ENCODE measurements at regions of chrX and their contacts with region 1.

Region 1: GRCh38 chrX:70042399-70043371 is 7.1 kb downstream of the AWAT2 start:
- DNase-seq: peak in 1 of 2 experiments; percentile 30
- ATAC-seq: peak in 1 of 2 experiments; percentile 69; a peak in 3 of 6 replicates
- H3K4me3 ChIP-seq: no peak overlapping the region
- H3K27ac ChIP-seq: no peak overlapping the region
- H3K4me1 ChIP-seq: peaks cover 7% of the 10 kb centered on the region; the same call in 1 of the 3 replicates
- CTCF ChIP-seq: no peak
- EP300 ChIP-seq: no peak
- POLR2A ChIP-seq: no peak
- RAD21 ChIP-seq: no peak

Region 2: DNA sequence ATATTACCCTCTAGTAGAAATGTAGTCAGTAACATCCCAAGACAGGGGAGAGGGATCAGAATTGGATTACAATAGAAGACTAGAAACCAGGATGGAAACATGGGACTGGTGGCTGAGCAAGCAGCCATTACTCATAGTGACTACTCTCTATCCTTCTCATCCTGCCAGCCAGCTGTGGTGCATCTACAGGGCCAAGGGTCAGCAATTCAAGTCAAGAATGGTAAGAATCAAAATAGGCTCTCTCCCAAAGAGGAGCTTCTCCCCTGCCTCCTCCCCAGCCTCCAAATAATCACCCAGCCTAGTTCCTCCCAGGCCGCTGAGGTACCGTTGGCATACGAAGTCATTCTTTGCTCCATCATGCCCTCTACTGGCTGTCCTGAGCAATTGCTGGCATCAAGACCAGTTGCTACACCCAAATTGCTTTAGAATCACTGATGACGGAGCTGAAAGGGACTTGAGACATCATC is 12.4 kb before region 1 on chrX:
- CTCF ChIA-PET with region 1: interaction called, 49 read pairs
- POLR2A ChIA-PET with region 1: no interaction called
- DNase-seq: peak; percentile 51 to 61
- ATAC-seq: peak; percentile 77 to 89
- H3K4me3 ChIP-seq: no peak overlapping the region
- H3K27ac ChIP-seq: no peak overlapping the region
- H3K4me1 ChIP-seq: no peaks in the 10 kb centered on the region
- CTCF ChIP-seq: no peak; the same call in 1 of the 3 replicates
- EP300 ChIP-seq: no peak
- POLR2A ChIP-seq: no peak
- RAD21 ChIP-seq: peak; percentile 63 to 65

Region 3: GRCh38 chrX:70117713-70118112 is 75.0 kb after region 1 on chrX:
- CTCF ChIA-PET with region 1: no interaction called
- POLR2A ChIA-PET with region 1: no interaction called
- DNase-seq: no peak
- ATAC-seq: no peak
- H3K4me3 ChIP-seq: no peak overlapping the region
- H3K27ac ChIP-seq: no peak overlapping the region
- H3K4me1 ChIP-seq: no peaks in the 10 kb centered on the region
- CTCF ChIP-seq: no peak
- EP300 ChIP-seq: no peak
- POLR2A ChIP-seq: no peak
- RAD21 ChIP-seq: no peak